ENCODE measurements at regions of chr19 and their contacts with region 1.

Region 1: GRCh38 chr19:45187421-45188100 is 9.0 kb downstream of the BLOC1S3 start:
- DNase-seq: peak; percentile 27
- ATAC-seq: peak; percentile 96
- H3K4me3 Mint-ChIP-seq: no peak overlapping the region
- H3K27ac Mint-ChIP-seq: no peak overlapping the region
- H3K4me1 Mint-ChIP-seq: peaks cover 23% of the 10 kb centered on the region
- H3K27me3 Mint-ChIP-seq: no peaks in the 10 kb centered on the region
- CTCF ChIP-seq: no peak

Region 2: GRCh38 chr19:44689056-44689895 is 498.3 kb before region 1 on chr19:
- CTCF ChIA-PET with region 1: no interaction called
- POLR2A ChIA-PET with region 1: interaction called, 3 read pairs
- intact Hi-C with region 1: loop called (anchors 1 kb)
- DNase-seq: peak; percentile 73
- ATAC-seq: peak; percentile 51
- H3K4me3 Mint-ChIP-seq: no peak overlapping the region
- H3K27ac Mint-ChIP-seq: no peak overlapping the region
- H3K4me1 Mint-ChIP-seq: peaks cover 51% of the 10 kb centered on the region
- H3K27me3 Mint-ChIP-seq: peaks cover 11% of the 10 kb centered on the region
- CTCF ChIP-seq: no peak

Region 3: GRCh38 chr19:44903602-44904425 is 283.7 kb before region 1 on chr19:
- CTCF ChIA-PET with region 1: interaction called, 3 read pairs
- POLR2A ChIA-PET with region 1: no interaction called
- intact Hi-C with region 1: loop called (anchors 1 kb)
- DNase-seq: peak; percentile 78
- ATAC-seq: peak; percentile 68
- H3K4me3 Mint-ChIP-seq: no peak overlapping the region
- H3K27ac Mint-ChIP-seq: no peak overlapping the region
- H3K4me1 Mint-ChIP-seq: peaks cover 18% of the 10 kb centered on the region
- H3K27me3 Mint-ChIP-seq: peaks cover 15% of the 10 kb centered on the region
- CTCF ChIP-seq: peak; percentile 96

Region 4: GRCh38 chr19:44988896-44989556 is 198.5 kb before region 1 on chr19:
- CTCF ChIA-PET with region 1: interaction called, 3 read pairs
- POLR2A ChIA-PET with region 1: no interaction called
- intact Hi-C with region 1: loop called (anchors 1 kb)
- DNase-seq: peak; percentile 57
- ATAC-seq: peak; percentile 97
- H3K4me3 Mint-ChIP-seq: no peak overlapping the region
- H3K27ac Mint-ChIP-seq: no peak overlapping the region
- H3K4me1 Mint-ChIP-seq: no peaks in the 10 kb centered on the region
- H3K27me3 Mint-ChIP-seq: no peaks in the 10 kb centered on the region
- CTCF ChIP-seq: no peak

Region 5: DNA sequence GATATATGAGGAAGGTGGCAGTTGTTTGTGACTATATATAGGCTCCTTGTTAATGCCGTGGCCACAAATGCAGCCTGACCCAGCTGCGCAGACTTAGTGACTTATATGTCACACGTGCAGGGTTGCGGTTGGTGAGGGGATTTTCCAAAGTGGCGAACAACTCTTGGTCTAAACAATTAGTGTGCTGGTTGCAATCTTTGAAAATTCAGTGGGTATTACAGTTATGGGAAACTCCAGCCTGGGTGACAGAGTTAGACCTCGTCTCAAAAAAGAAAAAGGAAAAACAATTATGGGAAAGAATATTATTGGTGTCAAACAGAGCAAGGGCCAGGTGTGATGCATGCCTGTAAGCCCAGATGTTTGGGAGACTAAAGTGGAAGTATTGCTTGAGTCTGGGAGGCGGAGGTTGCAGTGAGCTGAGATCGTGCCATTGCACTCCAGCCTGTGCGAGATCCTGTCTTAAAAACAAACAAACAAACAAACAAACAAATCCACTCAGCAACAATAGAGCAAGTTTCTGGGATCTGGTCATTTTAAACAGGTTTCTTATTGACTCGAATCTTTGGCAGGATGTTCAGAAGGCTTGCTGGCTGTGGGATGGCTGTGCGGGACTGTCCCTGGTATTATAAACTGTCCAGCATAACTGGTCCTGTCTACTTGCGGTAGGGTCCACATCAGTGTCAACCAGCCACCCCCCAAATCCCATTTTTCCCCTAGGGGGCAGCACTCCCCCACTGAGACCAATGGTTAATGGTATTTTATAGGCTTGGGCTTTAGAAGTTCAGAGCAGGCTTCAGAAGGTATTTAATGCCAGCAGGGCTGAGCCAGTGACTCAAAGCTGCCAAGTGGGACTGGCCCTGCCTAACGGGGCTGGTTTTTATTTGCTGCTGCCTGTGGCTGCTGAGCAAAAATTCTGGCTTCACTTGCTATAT is 170.9 kb before region 1 on chr19:
- CTCF ChIA-PET with region 1: no interaction called
- POLR2A ChIA-PET with region 1: no interaction called
- intact Hi-C with region 1: loop called (anchors 1 kb)
- DNase-seq: peak; percentile 62
- ATAC-seq: peak; percentile 81
- H3K4me3 Mint-ChIP-seq: peak overlapping the region; percentile 64
- H3K27ac Mint-ChIP-seq: peak overlapping the region; percentile 89
- H3K4me1 Mint-ChIP-seq: peaks cover 22% of the 10 kb centered on the region
- H3K27me3 Mint-ChIP-seq: no peaks in the 10 kb centered on the region
- CTCF ChIP-seq: no peak

Region 6: DNA sequence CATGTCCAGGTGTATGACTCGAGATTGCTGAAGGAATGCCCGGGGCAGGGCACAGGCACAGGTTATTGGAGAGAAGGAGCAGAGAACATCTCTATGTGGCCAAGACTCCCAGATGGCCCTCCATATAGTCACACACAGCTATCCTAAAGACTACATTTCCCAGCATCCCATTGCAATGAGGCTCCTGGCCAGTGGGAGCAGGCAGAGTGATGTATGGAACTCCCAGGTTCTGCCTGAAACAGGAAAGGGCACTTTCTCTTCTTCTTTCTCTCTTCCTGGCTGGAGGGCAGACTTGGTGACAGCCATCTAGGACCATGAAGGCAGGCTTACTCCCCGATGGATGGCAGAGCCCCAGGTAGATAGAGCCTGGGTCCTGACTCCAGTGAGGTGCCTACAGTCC is 203.8 kb after region 1 on chr19:
- CTCF ChIA-PET with region 1: no interaction called
- POLR2A ChIA-PET with region 1: no interaction called
- intact Hi-C with region 1: no loop called
- DNase-seq: no peak
- ATAC-seq: no peak
- H3K4me3 Mint-ChIP-seq: no peak overlapping the region
- H3K27ac Mint-ChIP-seq: no peak overlapping the region
- H3K4me1 Mint-ChIP-seq: no peaks in the 10 kb centered on the region
- H3K27me3 Mint-ChIP-seq: peaks cover 11% of the 10 kb centered on the region
- CTCF ChIP-seq: no peak

Measured in activated B cell treated with CpG ODN at 0.5 μM for 24 hours (primary cell).